A549 (cell line): ENCODE measurements at regions of chr17 and their contacts with region 1.

Region 1: DNA sequence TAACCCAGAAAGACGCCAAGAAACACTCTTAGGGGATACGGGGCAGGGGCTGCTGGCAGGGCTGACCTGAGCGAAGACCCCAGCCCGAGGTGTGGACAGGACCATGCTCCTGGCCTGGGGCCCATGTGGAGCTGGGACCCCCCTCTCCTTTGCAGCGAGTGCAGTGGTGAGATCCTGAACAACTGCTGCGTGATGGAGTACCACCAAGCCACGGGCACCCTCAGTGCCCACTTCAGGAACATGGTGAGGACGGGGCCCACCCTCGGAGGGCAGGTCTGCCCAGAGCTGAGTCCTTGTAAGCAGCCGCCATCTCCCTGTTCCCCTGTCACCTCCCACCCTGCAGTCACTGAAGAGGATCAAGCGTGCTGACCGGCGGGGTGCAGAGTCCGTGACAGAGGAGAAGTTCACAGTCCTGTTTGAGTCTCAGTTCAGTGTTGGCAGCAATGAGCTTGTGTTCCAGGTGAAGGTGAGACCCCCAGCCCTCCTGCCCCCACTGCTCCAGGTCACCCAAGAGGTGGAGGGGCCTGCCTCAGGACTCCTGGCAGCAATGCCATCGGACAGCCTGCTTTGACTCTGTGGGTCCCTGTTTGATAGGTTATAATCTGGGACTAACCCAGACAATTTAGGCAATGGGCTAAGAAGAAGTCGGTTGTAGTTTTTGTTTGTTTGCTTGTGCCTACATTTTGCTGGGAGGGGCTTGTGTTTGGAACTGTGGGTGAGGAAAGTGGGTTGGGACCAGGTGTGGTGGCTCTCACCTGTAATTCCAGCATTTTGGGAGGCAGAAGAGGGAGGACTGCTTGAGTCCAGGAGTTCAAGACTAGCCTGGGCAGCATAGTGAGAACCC is 16.1 kb downstream of the STAT5A start:
- DNase-seq: no peak
- ATAC-seq: no peak
- H3K4me3 ChIP-seq: no peak overlapping the region
- H3K27ac ChIP-seq: no peak overlapping the region
- H3K4me1 ChIP-seq: no peaks in the 10 kb centered on the region
- CTCF ChIP-seq: no peak
- EP300 ChIP-seq: no peak
- POLR2A ChIP-seq: no peak
- RAD21 ChIP-seq: no peak

Region 2: DNA sequence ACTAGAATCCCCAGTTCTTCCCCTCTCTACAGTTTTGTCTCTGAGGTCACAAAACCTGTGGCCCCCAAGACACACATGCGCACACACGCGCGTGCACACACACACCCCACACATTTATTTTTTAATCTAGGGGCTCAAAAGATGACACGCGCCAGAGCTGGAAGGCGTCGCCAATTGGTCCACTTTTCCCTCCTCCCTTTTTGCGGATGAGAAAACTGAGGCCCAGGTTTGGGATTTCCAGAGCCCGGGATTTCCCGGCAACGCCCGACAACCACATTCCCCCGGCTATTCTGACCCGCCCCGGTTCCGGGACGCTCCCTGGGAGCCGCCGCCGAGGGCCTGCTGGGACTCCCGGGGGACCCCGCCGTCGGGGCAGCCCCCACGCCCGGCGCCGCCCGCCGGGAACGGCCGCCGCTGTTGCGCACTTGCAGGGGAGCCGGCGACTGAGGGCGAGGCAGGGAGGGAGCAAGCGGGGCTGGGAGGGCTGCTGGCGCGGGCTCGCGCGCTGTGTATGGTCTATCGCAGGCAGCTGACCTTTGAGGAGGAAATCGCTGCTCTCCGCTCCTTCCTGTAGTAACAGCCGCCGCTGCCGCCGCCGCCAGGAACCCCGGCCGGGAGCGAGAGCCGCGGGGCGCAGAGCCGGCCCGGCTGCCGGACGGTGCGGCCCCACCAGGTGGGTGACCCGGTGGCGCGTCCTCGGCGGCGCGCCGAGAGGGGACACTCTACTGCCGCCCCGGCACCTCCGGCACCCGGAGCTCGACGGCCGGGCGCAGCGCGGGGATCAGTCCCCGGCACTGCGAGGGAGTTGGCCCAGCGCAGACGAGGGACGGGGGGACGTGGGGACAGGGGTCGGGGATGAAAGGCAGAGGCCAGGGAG is 16.2 kb before region 1 on chr17 and contains the start of gene STAT5A:
- CTCF ChIA-PET with region 1: interaction called, 65 read pairs
- POLR2A ChIA-PET with region 1: no interaction called
- DNase-seq: peak; percentile 73 to 83
- ATAC-seq: peak; percentile 81 to 86
- H3K4me3 ChIP-seq: peak within 1 kb of the TSS; percentile 62
- H3K27ac ChIP-seq: peak within 1 kb of the TSS; percentile 79 to 92
- H3K4me1 ChIP-seq: peaks cover 12% of the 10 kb centered on the region
- CTCF ChIP-seq: no peak
- EP300 ChIP-seq: no peak
- POLR2A ChIP-seq: no peak; the same call in 1 of the 2 replicates
- RAD21 ChIP-seq: 0 out of 5 replicates have a peak, but pooled peaks of 1 of the 2 experiments have one; percentile 13
- polyA plus RNA-seq, gene STAT5A: 2.2 and 3.1 TPM in 2 replicates

Region 3: DNA sequence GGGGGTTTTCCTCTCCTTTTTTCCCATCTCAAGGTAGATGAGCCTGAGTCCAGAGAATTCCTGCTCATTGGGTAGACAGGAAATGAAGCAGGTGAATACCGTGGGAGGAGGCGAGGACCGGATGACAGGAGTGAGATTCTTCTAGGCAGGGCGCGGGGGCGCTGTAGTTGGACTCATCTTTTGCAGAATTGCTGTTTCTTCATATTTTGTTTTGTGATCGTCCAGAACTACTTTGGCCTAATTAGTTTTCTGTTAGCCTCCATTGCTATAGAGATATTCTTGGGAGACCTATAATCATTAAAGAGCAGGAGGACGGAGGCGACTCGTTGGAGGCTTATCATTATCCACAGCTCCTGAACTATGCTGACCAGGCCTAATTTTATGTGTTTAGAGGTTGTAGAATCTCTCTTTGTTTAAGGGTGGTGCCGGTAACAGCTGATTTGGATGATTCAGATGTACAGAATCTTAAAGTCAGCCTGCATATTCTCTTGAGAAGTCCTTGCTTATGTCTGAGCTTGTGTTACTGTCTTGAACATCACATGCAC is 154.9 kb after region 1 on chr17:
- CTCF ChIA-PET with region 1: interaction called, 17 read pairs
- POLR2A ChIA-PET with region 1: interaction called, 13 read pairs
- DNase-seq: peak; percentile 68 to 74
- ATAC-seq: peak; percentile 77 to 79
- H3K4me3 ChIP-seq: peak overlapping the region; percentile 83
- H3K27ac ChIP-seq: peak overlapping the region; percentile 84 to 88
- H3K4me1 ChIP-seq: peaks cover 48% of the 10 kb centered on the region
- CTCF ChIP-seq: peak; percentile 79
- EP300 ChIP-seq: no peak
- POLR2A ChIP-seq: no peak
- RAD21 ChIP-seq: 0 out of 5 replicates have a peak, but pooled peaks of 1 of the 2 experiments have one; percentile 22